Common myeloid progenitor, CD34-positive (primary cell): ENCODE measurements at regions of chr13 and their contacts with region 1.

Region 1: GRCh38 chr13:98466634-98467236 is 110.2 kb downstream of the STK24 start:
- DNase-seq: peak; percentile 38 to 50 (median 47)
- H3K4me3 ChIP-seq: no peak overlapping the region
- H3K27ac ChIP-seq: no peak overlapping the region
- H3K4me1 ChIP-seq: no peaks in the 10 kb centered on the region
- H3K27me3 ChIP-seq: no peaks in the 10 kb centered on the region

Region 2: DNA sequence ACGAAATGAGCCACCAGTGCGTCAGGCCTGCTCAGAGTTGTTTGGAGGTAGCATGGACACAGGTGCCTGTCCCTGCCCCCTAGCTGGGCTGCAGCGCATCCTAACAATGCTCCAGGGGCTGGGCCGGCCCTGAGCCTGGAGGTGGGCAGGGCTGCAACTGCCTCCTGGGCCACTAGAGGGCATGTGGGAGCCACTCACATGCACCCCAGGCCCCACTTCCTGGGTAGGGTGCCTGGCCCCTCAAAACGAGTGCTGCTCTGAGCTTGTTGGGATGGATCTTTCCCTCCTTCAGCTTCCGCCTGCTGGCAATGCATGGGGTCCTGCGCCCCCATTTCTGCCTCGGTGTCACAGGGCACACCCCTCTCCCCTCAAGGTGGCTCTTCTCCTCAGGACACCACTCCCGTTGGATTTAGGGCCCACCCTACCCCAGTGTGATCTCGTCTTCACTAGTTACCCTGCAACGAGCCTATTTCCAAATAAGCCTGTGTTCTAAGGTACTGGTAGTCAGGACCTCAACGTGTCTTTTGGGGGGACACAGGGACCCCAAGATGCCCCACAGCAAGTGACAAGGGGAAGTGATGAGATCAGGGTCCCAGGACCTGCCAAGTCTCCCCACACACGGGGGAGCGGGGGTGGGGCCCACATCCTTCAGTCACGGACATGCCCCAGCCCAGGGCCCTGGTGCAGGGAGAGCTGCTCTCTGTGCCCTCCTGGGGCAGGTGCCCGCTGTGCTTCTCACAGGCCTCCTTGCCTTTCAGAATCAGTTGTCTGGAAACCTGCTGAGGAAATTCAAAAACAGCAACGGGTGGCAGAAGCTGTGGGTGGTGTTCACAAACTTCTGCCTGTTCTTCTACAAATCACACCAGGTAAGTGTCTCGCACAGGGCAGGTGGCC is 21.1 kb before region 1 on chr13:
- CTCF ChIA-PET with region 1: interaction called, 54 read pairs
- POLR2A ChIA-PET with region 1: no interaction called
- DNase-seq: peak; percentile 60 to 75 (median 73)
- H3K4me3 ChIP-seq: peak overlapping the region in 2 of 7 experiments; percentile 34 to 69
- H3K27ac ChIP-seq: no peak overlapping the region
- H3K4me1 ChIP-seq: peaks cover 0 to 21% (median 9%) of the 10 kb centered on the region in 4 experiments
- H3K27me3 ChIP-seq: no peaks in the 10 kb centered on the region

Region 3: DNA sequence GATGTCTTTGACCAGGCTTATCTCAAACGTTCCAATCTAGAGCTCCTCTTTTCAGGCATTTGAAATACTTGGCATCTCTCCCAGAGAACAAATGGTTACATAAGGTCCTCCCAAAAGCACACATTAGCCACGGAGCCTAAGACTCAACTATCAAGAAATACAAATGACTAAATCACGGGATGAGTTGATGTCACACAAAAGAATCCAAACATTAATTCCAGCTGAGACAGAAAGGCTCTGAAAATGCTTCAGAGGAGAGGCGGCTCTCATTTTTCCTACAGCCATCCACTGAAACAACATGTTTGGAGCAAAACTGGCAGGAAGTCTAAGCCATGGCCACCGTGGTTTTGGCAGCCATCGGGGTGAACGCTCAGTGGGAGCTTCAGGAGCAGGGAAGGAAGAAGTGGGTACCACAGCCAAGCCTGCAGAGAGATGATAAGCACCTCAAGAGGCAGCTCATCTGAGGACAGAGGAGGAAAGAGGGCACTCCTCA is 12.3 kb before region 1 on chr13:
- CTCF ChIA-PET with region 1: interaction called, 19 read pairs
- POLR2A ChIA-PET with region 1: no interaction called
- DNase-seq: peak; percentile 39 to 56 (median 42)
- H3K4me3 ChIP-seq: peak overlapping the region in 3 of 7 experiments; percentile 5 to 58 (median 7)
- H3K27ac ChIP-seq: no peak overlapping the region
- H3K4me1 ChIP-seq: peaks cover 0 to 17% (median 11%) of the 10 kb centered on the region in 4 experiments
- H3K27me3 ChIP-seq: no peaks in the 10 kb centered on the region